ENCODE measurements at regions of chr12 and their contacts with region 1.

Region 1: GRCh38 chr12:132210223-132211055 is 66.2 kb downstream of the NOC4L start:
- DNase-seq: peak; percentile 70
- ATAC-seq: peak; percentile 62
- H3K4me3 Mint-ChIP-seq: no peak overlapping the region
- H3K27ac Mint-ChIP-seq: no peak overlapping the region; the same call in 1 of the 2 replicates
- H3K4me1 Mint-ChIP-seq: no peaks in the 10 kb centered on the region
- H3K27me3 Mint-ChIP-seq: peaks cover 65% of the 10 kb centered on the region
- CTCF ChIP-seq: no peak

Region 2: DNA sequence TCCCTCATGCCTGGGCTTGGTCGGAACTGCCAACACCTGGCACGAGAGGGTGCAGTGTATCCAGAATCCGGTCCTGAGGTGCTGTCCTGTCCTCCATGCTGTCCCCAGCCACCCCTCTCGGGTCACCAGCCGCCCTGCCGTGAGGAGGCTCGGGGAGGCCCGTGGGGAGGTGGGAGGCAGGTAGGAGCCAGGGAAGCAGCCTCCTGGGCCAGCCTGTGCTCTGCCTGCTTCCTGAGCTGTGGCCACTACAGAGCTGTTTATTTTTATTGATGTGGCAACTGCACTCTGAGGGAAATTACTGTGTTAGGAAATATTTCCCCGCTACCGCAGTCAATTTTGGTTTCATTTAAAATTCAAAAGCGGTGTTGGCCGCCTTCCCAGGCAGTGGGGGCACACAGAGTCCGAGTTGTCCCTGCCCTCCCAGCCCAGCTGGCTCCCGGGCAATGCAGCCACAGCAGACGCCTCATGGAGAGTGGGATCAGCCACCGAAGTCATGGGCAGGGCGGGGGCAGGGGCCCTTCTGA is 47.9 kb before region 1 on chr12:
- CTCF ChIA-PET with region 1: interaction called, 25 read pairs
- POLR2A ChIA-PET with region 1: no interaction called
- DNase-seq: no peak
- ATAC-seq: no peak
- H3K4me3 Mint-ChIP-seq: no peak overlapping the region
- H3K27ac Mint-ChIP-seq: no peak overlapping the region
- H3K4me1 Mint-ChIP-seq: no peaks in the 10 kb centered on the region
- H3K27me3 Mint-ChIP-seq: peaks cover 17% of the 10 kb centered on the region
- CTCF ChIP-seq: no peak

Measured in WTC11 (cell line).